ENCODE measurements at regions of chr20 and their contacts with region 1.

Region 1: GRCh38 chr20:40689943-40690835 is 1.2 kb upstream of the MAFB start:
- DNase-seq: peak; percentile 93
- H3K4me3 ChIP-seq: peak overlapping the region; percentile 76
- H3K27ac ChIP-seq: peak overlapping the region; percentile 99
- H3K4me1 ChIP-seq: peaks cover 57% of the 10 kb centered on the region
- H3K27me3 ChIP-seq: peaks cover 78% of the 10 kb centered on the region
- CTCF ChIP-seq: peak; percentile 95

Region 2: GRCh38 chr20:40160097-40160550 is 530.1 kb before region 1 on chr20:
- intact Hi-C with region 1: loop called (anchors 5 kb)
- DNase-seq: peak; percentile 26
- H3K4me3 ChIP-seq: no peak overlapping the region
- H3K27ac ChIP-seq: no peak overlapping the region
- H3K4me1 ChIP-seq: no peaks in the 10 kb centered on the region
- H3K27me3 ChIP-seq: peaks cover 4% of the 10 kb centered on the region
- CTCF ChIP-seq: peak; percentile 77

Region 3: DNA sequence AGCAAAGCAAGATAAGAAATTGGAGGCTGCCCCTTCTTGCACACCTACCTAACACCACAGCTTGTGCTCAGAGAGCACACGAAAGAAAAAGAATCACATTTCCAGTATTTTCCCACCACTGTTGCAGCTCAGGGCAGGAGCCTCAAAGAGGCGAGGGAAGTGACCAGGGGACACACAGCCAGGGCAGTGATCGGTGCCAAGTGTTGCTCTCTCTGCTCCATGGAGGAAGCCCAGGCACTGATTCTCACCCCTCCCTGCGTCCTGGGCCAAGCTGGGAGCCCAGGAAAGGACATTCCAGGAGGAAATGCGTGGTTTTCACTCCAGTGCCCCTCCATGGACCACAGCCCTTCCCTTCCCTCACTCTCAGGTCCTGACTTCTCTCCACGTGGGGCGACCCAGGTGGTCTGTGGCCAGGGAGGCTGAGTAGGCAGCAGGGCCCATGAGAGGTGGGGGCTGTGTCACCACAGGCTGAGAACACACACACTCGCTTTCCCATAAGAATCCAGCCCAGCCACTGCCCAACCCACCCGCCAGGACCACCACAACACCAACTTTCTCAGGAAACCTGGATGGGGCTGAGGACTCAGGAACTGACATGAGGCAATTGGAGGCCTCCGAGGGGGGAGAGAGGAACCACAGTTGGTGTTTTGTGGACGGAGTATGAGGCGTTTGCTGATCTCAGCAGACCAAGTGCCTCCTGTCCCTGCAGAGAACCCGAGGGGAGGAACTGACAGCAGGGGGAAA is 80.5 kb after region 1 on chr20:
- intact Hi-C with region 1: no loop called
- DNase-seq: no peak
- H3K4me3 ChIP-seq: no peak overlapping the region
- H3K27ac ChIP-seq: no peak overlapping the region
- H3K4me1 ChIP-seq: peaks cover 13% of the 10 kb centered on the region
- H3K27me3 ChIP-seq: peaks cover 12% of the 10 kb centered on the region
- CTCF ChIP-seq: no peak

Region 4: DNA sequence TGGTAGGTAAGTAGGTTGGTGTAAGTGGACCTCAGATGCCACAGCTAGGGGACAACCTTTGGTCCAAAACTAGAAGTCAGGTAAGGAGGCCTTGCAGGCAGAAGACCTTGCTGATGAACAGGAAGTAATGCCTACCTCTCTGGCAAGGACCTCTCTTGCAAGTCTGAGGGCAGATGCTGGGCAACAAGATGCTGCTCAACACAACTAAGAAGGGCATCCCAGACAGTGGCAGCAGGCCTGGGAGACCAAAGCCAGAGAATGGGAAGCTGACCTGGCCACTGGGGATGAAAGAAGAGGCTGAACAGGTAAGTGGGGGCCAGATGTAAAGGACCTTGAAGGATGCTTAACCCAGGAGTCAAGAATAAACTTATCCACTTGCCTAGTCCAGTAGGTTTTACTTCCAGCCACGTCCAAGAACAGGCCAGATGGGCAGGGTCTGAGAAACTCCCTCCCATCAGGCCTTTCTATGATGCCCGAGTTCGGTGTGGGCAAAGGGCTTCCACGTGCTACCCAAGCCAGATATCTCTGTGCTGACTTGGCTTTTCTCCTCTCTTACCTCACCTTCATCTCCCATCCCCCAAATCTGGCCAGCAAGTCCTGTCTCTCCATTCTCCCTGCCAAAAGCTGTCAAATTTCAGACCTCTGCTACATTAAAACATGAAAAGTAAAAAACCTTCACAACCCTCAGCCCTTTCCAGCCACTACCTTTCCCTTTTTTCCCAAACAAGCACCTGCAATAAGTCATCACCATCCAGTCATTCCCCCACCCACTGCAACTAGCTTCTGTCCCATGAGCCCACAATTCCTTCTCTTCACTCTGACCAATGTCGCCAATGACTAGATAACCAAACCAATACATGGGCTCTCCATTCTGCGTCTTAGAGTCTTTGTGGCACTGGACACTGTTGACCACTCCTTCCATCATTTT is 435.6 kb after region 1 on chr20:
- intact Hi-C with region 1: no loop called
- DNase-seq: no peak
- H3K4me3 ChIP-seq: no peak overlapping the region
- H3K27ac ChIP-seq: no peak overlapping the region
- H3K4me1 ChIP-seq: peaks cover 12% of the 10 kb centered on the region
- H3K27me3 ChIP-seq: no peaks in the 10 kb centered on the region
- CTCF ChIP-seq: no peak